Dendritic cell treated with granulocyte-macrophage colony-stimulating factor and Interleukin-4, amounts not matched to agents 40 ng/mL and 50 ng/mL, for 4 days (primary cell): ENCODE measurements at regions of chr17 and their contacts with region 1.

Region 1: GRCh38 chr17:7844292-7845154 is 10.3 kb upstream of the TMEM88 start:
- H3K4me3 Mint-ChIP-seq: peak overlapping the region; percentile 93
- H3K27ac Mint-ChIP-seq: peak overlapping the region; percentile 98
- H3K4me1 Mint-ChIP-seq: peaks cover 64% of the 10 kb centered on the region
- H3K27me3 Mint-ChIP-seq: no peaks in the 10 kb centered on the region

Region 2: DNA sequence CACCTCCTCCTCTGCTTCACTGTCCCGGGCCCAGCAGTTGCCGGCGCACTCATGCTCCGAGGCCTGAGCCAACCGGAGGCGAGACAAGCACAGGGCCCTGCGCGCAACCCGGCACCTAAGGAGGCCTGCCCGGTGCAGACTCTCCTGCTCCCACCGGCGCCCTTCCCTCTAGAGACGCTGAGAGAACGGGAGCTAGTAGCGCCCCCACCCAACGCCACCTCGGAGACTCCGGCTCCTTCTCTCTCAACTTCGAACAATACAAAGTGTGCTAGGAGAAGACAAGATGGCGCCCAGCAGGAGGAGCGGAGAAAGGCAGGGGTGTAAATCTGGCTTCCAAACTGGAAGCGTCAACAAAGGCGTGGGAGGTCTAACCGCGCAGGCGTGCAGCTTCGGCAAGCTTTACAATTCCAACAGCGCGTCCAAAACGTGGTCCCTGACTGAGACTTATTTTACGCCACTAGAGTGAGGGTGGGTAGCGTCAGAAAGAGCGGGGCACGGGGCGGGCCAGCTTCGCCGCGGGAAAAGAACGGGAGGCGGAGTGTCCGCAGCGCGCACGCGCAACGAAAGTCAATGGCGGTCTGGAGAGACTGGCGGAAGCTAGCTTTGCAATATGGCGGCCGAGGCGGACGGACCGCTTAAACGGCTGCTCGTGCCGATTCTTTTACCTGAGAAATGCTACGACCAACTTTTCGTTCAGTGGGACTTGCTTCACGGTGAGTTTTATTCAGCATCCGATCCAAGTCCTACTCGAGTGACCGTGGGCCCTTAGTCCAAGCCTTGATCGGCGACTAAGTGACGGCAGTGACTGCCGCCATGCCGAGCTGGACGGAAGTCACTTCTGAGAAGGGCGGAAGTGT is 261.0 kb before region 1 on chr17 and contains the start of gene MPDU1:
- intact Hi-C with region 1: loop called (anchors 5 kb)
- H3K4me3 Mint-ChIP-seq: peak within 1 kb of the TSS; percentile 97
- H3K27ac Mint-ChIP-seq: peak within 1 kb of the TSS; percentile 92
- H3K4me1 Mint-ChIP-seq: peaks cover 78% of the 10 kb centered on the region
- H3K27me3 Mint-ChIP-seq: no peaks in the 10 kb centered on the region

Region 3: DNA sequence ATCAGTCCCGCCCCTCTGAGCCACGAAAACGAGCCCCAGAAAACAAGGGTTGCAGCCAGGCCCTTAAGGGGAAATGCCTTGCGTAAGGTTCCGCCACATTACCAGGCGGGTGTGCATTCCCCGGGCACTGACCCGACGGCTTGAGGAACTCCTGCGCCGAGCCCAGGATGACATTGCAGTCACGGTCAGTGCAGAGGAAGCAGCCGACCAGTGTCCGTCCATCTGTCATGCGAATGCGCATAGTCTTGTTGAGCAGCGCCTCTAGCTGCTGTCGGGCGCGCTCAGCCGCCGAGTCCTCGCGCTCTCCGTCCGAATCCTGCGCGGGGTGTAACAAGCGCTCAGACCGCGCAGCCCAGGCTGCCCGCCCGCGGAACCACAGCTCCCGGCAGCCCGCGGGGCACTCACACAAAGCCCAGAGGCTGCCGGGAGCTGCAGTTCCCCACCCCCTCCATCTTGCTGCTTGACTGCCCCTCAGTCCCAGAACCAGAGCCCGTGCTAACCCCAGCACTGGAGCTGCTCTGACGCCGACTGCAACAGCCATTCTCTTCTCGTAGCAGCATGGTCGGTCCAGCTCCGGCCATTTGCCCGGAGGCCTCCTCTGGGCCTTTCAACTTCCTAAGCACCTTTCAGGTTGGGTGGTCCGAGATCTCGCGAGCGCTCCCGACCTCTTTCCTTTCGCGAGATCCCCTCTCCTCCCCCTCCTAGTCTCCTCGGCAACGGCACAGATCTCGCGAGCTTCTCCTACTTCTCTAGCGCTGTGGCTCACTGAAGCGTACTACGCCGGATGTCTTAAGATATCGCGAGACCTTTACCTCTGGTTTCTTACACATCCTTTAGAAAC is 12.6 kb after region 1 on chr17 and contains the start of gene NAA38:
- intact Hi-C with region 1: loop called (anchors 2 kb)
- H3K4me3 Mint-ChIP-seq: no peak within 1 kb of the TSS
- H3K27ac Mint-ChIP-seq: no peak within 1 kb of the TSS
- H3K4me1 Mint-ChIP-seq: peaks cover 15% of the 10 kb centered on the region
- H3K27me3 Mint-ChIP-seq: no peaks in the 10 kb centered on the region

Region 4: GRCh38 chr17:8156246-8156992 is 311.9 kb after region 1 on chr17:
- intact Hi-C with region 1: loop called (anchors 10 kb)
- H3K4me3 Mint-ChIP-seq: no peak overlapping the region
- H3K27ac Mint-ChIP-seq: no peak overlapping the region
- H3K4me1 Mint-ChIP-seq: peaks cover 32% of the 10 kb centered on the region
- H3K27me3 Mint-ChIP-seq: no peaks in the 10 kb centered on the region